ENCODE measurements at regions of chr22 and their contacts with region 1.

Region 1: GRCh38 chr22:42090596-42091454 is at the start of gene NDUFA6:
- DNase-seq: peak; percentile 99
- H3K4me3 Mint-ChIP-seq: peak within 1 kb of the TSS; percentile 96
- H3K27ac Mint-ChIP-seq: peak within 1 kb of the TSS; percentile 99
- H3K4me1 Mint-ChIP-seq: peaks cover 10% of the 10 kb centered on the region
- H3K27me3 Mint-ChIP-seq: no peaks in the 10 kb centered on the region
- CTCF ChIP-seq: peak; percentile 83
- total RNA-seq, gene NDUFA6: 74.9 and 80.4 TPM in 2 replicates

Region 2: DNA sequence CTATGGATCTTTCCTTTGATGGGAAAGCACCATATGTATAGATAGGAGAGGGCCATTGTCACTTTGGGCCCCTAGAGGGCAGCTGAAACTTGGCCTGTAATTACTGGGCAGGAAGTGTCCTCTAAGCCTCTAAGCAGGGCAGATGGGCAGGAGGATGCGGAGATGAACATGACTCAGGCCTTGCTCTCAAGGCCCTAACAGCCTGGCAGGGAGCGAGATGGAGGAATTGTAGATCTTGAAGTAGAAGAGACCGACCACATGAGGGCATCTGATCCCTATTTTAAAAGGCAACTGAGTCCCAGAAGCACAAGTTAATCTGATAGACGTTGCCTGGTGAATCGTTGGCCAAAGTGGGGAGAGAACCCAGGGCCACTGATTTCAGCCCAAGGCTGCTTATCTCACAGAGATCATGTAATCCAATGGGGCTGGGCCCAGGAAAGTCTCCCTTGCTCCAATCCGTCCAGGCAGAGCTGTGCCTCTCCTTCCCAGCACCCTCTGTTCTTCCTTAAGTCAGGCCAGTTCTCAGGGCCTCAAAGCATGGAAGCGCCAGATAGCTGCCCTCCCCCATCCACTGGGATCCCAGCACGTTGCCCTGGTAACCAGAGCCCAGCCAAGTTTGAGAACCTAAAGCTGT is 124.1 kb before region 1 on chr22:
- CTCF ChIA-PET with region 1: interaction called, 8 read pairs
- POLR2A ChIA-PET with region 1: no interaction called
- intact Hi-C with region 1: loop called (anchors 1 kb)
- DNase-seq: peak; percentile 76
- H3K4me3 Mint-ChIP-seq: no peak overlapping the region
- H3K27ac Mint-ChIP-seq: no peak overlapping the region
- H3K4me1 Mint-ChIP-seq: peaks cover 6% of the 10 kb centered on the region
- H3K27me3 Mint-ChIP-seq: no peaks in the 10 kb centered on the region
- CTCF ChIP-seq: peak; percentile 29

Region 3: DNA sequence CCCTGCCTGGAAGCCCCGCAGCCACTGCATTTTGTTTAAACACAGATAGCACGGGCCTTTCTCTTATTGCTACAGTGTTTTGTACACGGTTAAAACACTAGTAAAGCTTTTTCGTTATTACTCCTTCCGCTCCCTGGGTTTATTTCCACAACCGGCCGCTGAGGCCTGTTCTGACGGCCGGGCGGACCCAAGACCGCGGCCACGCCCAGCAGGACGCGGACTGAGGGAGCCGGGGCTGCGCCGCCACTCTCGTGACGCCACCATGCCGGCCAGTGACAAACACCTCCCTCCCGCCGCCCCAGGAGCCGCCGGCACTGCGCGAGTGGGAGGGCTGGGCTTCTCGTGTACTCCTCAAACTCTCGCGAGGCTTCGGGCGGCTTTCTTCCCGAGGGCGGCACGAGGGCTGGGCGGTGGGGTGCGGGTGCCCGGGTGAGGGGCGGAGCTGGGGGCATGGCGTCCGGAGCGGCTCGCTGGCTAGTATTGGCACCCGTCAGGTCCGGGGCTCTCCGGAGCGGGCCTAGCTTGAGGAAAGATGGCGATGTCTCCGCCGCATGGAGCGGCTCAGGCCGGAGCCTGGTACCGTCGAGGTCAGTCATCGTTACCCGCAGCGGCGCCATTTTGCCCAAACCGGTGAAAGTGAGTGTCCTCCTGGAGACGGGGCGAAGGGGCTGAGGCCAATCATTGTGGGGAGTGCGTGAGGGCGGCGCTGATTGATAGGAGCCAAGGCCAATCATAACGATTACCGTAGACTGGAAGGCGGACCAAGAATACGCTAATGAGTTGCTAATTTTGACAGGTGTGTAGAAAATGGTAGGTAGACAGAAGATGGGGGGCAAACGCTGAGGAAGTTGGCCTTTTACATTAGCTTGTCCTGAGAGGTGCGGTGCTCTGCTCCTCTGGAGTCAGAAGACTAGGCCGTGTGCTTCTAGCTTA is 11.2 kb before region 1 on chr22 and contains the start of gene SMDT1:
- CTCF ChIA-PET with region 1: interaction called, 7 read pairs
- POLR2A ChIA-PET with region 1: interaction called, 142 read pairs
- intact Hi-C with region 1: no loop called
- DNase-seq: peak; percentile 99
- H3K4me3 Mint-ChIP-seq: peak within 1 kb of the TSS; percentile 92
- H3K27ac Mint-ChIP-seq: peak within 1 kb of the TSS; percentile 99
- H3K4me1 Mint-ChIP-seq: no peaks in the 10 kb centered on the region
- H3K27me3 Mint-ChIP-seq: no peaks in the 10 kb centered on the region
- CTCF ChIP-seq: no peak
- total RNA-seq, gene SMDT1: 76.9 and 96.7 TPM in 2 replicates

Region 4: GRCh38 chr22:42114721-42115120 is 23.9 kb after region 1 on chr22:
- CTCF ChIA-PET with region 1: interaction called, 15 read pairs
- POLR2A ChIA-PET with region 1: interaction called, 5 read pairs
- intact Hi-C with region 1: no loop called
- DNase-seq: peak; percentile 46
- H3K4me3 Mint-ChIP-seq: no peak overlapping the region
- H3K27ac Mint-ChIP-seq: no peak overlapping the region
- H3K4me1 Mint-ChIP-seq: no peaks in the 10 kb centered on the region
- H3K27me3 Mint-ChIP-seq: no peaks in the 10 kb centered on the region
- CTCF ChIP-seq: peak; percentile 40

Region 5: GRCh38 chr22:42269407-42270177 is 178.8 kb after region 1 on chr22:
- CTCF ChIA-PET with region 1: interaction called, 3 read pairs
- POLR2A ChIA-PET with region 1: interaction called, 3 read pairs
- intact Hi-C with region 1: loop called (anchors 5 kb)
- DNase-seq: peak; percentile 71
- H3K4me3 Mint-ChIP-seq: peak overlapping the region; percentile 92
- H3K27ac Mint-ChIP-seq: peak overlapping the region; percentile 79
- H3K4me1 Mint-ChIP-seq: peaks cover 21% of the 10 kb centered on the region
- H3K27me3 Mint-ChIP-seq: no peaks in the 10 kb centered on the region
- CTCF ChIP-seq: peak; percentile 6

Region 6: DNA sequence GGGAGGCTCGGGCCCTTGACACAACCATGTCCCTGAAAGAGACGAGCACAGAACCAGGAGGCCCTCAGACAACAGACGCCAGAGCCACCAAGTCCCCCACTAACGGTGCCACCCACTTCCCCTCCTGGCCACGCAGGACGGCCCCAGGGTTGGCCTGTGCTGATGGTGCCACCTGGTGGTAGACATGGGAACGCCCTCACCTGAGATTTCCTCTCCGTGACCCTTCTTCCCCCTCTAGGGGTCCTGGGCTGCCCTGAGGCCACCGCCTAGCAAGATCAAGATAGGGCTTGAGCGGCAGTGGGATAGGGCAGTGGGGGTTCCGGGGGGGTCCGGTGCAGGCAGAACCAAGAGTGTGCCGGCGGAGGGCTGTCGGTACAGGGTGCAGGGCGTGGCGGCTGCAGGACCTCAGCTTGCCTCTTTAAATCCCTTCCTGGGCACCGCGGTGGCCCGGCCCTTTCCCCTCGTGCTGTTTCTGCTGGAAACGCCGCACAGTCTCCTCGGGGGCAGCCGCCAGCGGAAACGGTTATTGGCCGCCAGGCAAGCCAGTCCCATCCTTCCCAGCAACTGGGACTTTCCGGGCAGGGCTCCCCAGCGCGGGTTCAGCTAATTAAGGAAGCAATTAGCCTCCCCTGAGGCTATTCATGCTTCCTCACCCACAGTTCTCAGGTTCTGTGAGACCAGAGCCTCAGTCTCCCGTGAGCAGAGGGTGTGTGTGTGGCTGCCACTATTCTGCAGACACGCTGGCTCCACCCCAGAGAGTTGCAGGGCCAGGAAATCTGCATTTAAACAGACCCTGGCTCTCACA is 346.9 kb after region 1 on chr22:
- CTCF ChIA-PET with region 1: interaction called, 12 read pairs
- POLR2A ChIA-PET with region 1: interaction called, 11 read pairs
- intact Hi-C with region 1: loop called (anchors 1 kb)
- DNase-seq: peak; percentile 59
- H3K4me3 Mint-ChIP-seq: peak overlapping the region; percentile 68
- H3K27ac Mint-ChIP-seq: no peak overlapping the region
- H3K4me1 Mint-ChIP-seq: peaks cover 15% of the 10 kb centered on the region
- H3K27me3 Mint-ChIP-seq: no peaks in the 10 kb centered on the region
- CTCF ChIP-seq: peak; percentile 100